Pancreas (tissue), 10 donors: ENCODE measurements at regions of chr7 and their contacts with region 1.

Region 1: GRCh38 chr7:129089521-129090212 is 34.8 kb upstream of the TNPO3 start:
- DNase-seq: no peak
- ATAC-seq: no peak
- H3K4me3 ChIP-seq: no peak overlapping the region
- H3K27ac ChIP-seq: no peak overlapping the region
- H3K4me1 ChIP-seq: no peaks in the 10 kb centered on the region
- H3K27me3 ChIP-seq: no peaks in the 10 kb centered on the region
- CTCF ChIP-seq: no peak

Region 2: DNA sequence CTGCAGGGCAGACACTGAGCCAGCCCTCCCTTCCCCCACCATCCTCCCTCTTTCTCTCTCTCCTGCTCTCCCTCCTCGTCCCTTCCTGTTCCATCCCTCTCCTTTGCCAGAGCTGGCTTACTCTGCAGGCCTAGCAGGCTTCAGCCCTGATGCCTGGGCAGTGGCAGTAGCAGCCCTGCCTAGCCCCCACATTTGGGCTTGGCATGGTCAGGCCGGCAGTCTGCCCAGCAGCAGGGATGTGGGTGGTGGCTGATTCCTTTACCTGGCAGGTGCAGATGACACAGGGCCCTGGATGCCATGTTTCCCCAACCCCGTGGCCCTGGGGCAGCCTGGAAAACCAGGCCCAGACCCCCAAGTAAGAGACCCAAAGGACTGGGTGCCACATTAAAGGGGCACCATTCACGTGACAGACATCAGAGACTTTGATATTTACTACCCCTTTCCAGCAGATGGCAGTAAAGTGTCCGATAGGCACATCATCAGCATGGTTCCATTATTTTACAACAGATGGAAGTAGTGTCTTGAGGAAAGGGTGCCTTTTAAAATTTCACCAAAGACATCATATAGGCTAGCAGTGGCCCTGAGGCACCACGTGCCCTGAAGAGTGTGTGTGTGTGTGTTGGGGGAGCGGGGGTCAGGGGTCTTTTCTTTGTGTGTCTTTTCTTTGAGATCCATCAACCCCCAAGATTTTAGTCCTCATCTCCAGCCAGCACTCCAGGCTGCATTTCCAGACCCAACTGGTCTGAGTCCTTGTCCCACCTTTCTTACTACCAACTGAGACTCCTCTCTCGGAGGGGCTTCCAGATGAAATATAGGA is 185.1 kb before region 1 on chr7:
- intact Hi-C with region 1: loop called in 2 of 3 experiments (anchors 5 kb)
- DNase-seq: peak in 2 of 6 donors; percentile 14 to 52
- ATAC-seq: peak; percentile 66 to 91 (median 82)
- H3K4me3 ChIP-seq: no peak overlapping the region
- H3K27ac ChIP-seq: no peak overlapping the region
- H3K4me1 ChIP-seq: no peaks in the 10 kb centered on the region
- H3K27me3 ChIP-seq: no peaks in the 10 kb centered on the region
- CTCF ChIP-seq: peak in 3 of 4 donors; percentile 32 to 48 (median 41)